ENCODE measurements at regions of chr3 and their contacts with region 1.

Region 1: DNA sequence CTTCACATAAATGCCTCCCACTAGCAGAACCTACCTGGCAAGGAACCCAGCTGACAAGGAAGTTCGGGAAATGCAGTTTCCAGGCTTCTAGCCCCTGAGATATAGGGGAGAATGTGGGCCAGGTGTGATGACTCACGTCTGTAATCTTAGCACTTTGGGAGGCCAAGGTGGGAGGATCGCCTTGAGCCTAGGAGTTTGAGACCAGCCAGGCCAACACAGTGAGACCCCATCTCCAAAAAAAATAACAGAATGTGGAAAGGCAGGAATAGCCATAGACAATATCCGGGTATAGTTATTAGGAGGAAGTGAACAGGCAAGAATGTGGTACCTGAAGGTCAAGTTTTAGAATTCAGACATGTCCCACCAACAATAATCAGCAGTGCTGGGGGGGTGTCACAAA is 40.5 kb upstream of the SH3BP5 start:
- DNase-seq: no peak
- H3K4me3 ChIP-seq: no peak overlapping the region
- H3K27ac ChIP-seq: no peak overlapping the region
- H3K4me1 ChIP-seq: no peaks in the 10 kb centered on the region
- H3K27me3 ChIP-seq: no peaks in the 10 kb centered on the region
- CTCF ChIP-seq: no peak

Region 2: GRCh38 chr3:15295506-15295905 is 77.4 kb before region 1 on chr3:
- CTCF ChIA-PET with region 1: no interaction called
- dilution Hi-C with region 1: loop called (anchors 5 kb)
- in situ Hi-C with region 1: no loop called
- intact Hi-C with region 1: no loop called
- DNase-seq: no peak
- H3K4me3 ChIP-seq: no peak overlapping the region
- H3K27ac ChIP-seq: no peak overlapping the region
- H3K4me1 ChIP-seq: peaks cover 14% of the 10 kb centered on the region
- H3K27me3 ChIP-seq: no peaks in the 10 kb centered on the region
- CTCF ChIP-seq: no peak

Region 3: GRCh38 chr3:15768421-15769255 is 395.7 kb after region 1 on chr3:
- CTCF ChIA-PET with region 1: no interaction called
- dilution Hi-C with region 1: no loop called
- in situ Hi-C with region 1: no loop called
- intact Hi-C with region 1: no loop called
- DNase-seq: peak; percentile 94
- H3K4me3 ChIP-seq: peak overlapping the region in 1 of 3 experiments; percentile 20
- H3K27ac ChIP-seq: peak overlapping the region; percentile 79
- H3K4me1 ChIP-seq: peaks cover 24% of the 10 kb centered on the region
- H3K27me3 ChIP-seq: no peaks in the 10 kb centered on the region
- CTCF ChIP-seq: no peak